CD8-positive, alpha-beta T cell (primary cell): ENCODE measurements at regions of chr18 and their contacts with region 1.

Region 1: GRCh38 chr18:35343936-35344735 is at the start of gene ZNF24:
- DNase-seq: peak; percentile 84 to 95 (median 92)
- ATAC-seq: peak; percentile 90
- H3K4me3 ChIP-seq: peak within 1 kb of the TSS; percentile 96 to 97
- H3K4me3 Mint-ChIP-seq: peak within 1 kb of the TSS; percentile 94
- H3K27ac ChIP-seq: peak within 1 kb of the TSS; percentile 98 to 99
- H3K27ac Mint-ChIP-seq: peak within 1 kb of the TSS; percentile 97
- H3K4me1 ChIP-seq: peaks cover 45% of the 10 kb centered on the region
- H3K4me1 Mint-ChIP-seq: peaks cover 48% of the 10 kb centered on the region
- H3K27me3 ChIP-seq: no peaks in the 10 kb centered on the region
- H3K27me3 Mint-ChIP-seq: no peaks in the 10 kb centered on the region
- CTCF ChIP-seq: no peak
- total RNA-seq, gene ZNF24: 55.3 to 57.0 TPM

Region 2: DNA sequence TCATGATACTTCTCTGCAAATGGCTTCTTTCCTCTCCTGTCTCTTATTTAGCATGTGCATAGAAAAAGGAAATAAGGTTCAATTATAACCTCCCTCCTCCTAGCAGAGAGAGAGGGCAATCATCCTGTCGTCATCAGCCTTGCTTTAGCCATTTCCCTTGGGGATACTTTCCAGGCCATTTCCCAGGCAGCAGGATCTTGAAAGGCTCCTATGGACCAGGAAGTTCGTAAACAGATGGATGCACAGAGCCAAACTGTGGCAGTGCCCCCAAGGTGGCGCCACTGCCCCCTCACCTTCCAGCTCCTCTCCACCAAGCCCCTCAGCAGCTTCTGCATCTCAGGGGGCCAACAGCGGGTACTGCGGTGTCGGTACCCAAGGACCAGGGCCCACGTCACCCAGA is 476.6 kb before region 1 on chr18:
- CTCF ChIA-PET with region 1: no interaction called
- POLR2A ChIA-PET with region 1: no interaction called
- intact Hi-C with region 1: loop called in 1 of 2 experiments (anchors 10 kb)
- DNase-seq: peak in 1 of 9 experiments; percentile 6
- ATAC-seq: no peak
- H3K4me3 ChIP-seq: no peak overlapping the region
- H3K4me3 Mint-ChIP-seq: no peak overlapping the region
- H3K27ac ChIP-seq: no peak overlapping the region
- H3K27ac Mint-ChIP-seq: no peak overlapping the region
- H3K4me1 ChIP-seq: peaks cover 3% of the 10 kb centered on the region
- H3K4me1 Mint-ChIP-seq: peaks cover 16% of the 10 kb centered on the region
- H3K27me3 ChIP-seq: no peaks in the 10 kb centered on the region
- H3K27me3 Mint-ChIP-seq: no peaks in the 10 kb centered on the region
- CTCF ChIP-seq: no peak

Region 3: DNA sequence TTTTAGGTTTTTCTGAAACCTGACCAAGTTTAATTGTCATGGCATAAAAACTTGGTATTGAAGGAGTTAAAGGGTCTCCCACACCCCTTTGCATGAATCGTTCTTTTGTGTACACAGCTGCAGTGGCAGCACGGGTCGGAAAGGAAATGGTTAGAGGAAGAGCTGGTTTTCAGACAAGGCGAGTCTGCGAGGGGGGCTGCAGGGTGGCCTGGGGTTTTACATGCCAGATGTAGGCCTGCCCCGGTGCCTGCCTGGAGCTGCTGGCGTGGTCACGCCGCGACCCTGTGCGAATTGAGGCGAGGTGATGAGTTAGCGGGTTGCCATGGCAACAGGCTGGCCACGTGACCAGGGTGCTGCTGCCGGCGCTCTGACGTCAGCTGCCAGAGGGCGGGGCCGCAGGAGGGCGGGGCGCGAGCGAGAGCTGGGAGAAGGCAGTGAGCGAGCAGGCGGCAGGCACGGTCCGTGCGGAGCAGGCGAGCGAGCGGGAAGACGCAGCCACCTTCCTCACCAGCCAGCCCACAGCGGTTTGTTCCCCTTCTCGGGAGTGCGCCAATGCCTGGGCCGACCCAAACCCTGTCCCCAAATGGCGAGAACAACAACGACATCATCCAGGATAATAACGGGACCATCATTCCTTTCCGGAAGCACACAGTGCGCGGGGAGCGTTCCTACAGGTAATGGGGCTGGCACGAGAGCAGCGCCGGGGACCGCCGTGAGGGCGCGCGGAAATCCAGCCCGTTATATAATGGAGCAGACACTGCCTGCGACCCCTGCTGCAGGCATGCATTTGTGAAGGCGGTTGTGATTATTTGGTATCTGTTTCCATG is 302.9 kb before region 1 on chr18 and contains the start of gene MAPRE2:
- CTCF ChIA-PET with region 1: no interaction called
- POLR2A ChIA-PET with region 1: interaction called, 7 read pairs
- intact Hi-C with region 1: loop called (anchors 2 to 5 kb)
- DNase-seq: peak; percentile 99 to 100 (median 100)
- ATAC-seq: peak; percentile 79
- H3K4me3 ChIP-seq: peak within 1 kb of the TSS; percentile 87 to 90
- H3K4me3 Mint-ChIP-seq: peak within 1 kb of the TSS; percentile 98
- H3K27ac ChIP-seq: peak within 1 kb of the TSS; percentile 93 to 96
- H3K27ac Mint-ChIP-seq: peak within 1 kb of the TSS; percentile 96
- H3K4me1 ChIP-seq: peaks cover 42% of the 10 kb centered on the region
- H3K4me1 Mint-ChIP-seq: peaks cover 44% of the 10 kb centered on the region
- H3K27me3 ChIP-seq: no peaks in the 10 kb centered on the region
- H3K27me3 Mint-ChIP-seq: no peaks in the 10 kb centered on the region
- CTCF ChIP-seq: no peak
- total RNA-seq, gene MAPRE2: 137 to 145 TPM

Region 4: DNA sequence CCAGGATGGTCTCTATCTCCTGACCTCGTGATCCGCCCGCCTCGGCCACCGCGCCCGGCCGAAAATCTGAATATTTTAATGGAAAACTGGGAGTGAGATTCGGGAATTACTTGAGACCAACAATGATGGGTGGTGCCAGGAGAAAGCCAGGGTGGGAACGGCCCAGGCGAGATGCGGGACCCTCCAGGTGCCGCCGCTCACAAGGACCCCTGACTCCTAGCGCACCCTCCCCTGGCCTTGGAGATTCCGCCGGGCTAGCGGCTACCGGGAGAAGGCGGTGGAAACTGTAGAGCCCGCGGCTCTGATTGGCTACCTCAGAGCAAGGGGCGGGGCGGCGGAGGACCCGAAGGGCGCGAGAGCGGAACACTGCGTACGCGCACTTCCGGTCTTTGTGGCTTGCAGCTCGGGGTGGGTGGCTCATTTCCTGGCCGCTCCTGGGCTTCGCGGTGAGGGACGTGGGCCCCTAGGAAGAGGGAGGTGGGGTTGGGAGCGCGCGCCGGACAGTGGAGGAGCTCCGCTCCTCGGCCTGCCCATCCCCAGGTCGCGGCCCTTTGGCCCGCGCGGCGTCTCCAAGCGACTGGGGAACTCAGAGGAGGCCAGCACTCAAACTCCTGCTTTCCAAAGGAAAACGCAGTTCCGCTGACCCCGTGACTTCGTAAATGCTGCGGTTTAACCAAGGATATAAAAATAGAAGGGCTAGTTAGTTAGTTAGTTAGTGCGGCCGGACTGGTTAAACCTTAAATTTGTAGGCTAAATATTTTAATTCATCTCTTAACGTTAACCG is 103.3 kb before region 1 on chr18 and contains the start of gene ZNF397:
- CTCF ChIA-PET with region 1: interaction called, 5 read pairs
- POLR2A ChIA-PET with region 1: interaction called, 5 read pairs
- intact Hi-C with region 1: loop called (anchors 1 kb)
- DNase-seq: peak; percentile 85 to 97 (median 96)
- ATAC-seq: peak; percentile 96
- H3K4me3 ChIP-seq: peak within 1 kb of the TSS; percentile 87 to 96
- H3K4me3 Mint-ChIP-seq: peak within 1 kb of the TSS; percentile 96
- H3K27ac ChIP-seq: peak within 1 kb of the TSS; percentile 94 to 98
- H3K27ac Mint-ChIP-seq: peak within 1 kb of the TSS; percentile 97
- H3K4me1 ChIP-seq: peaks cover 18% of the 10 kb centered on the region
- H3K4me1 Mint-ChIP-seq: peaks cover 39% of the 10 kb centered on the region
- H3K27me3 ChIP-seq: no peaks in the 10 kb centered on the region
- H3K27me3 Mint-ChIP-seq: no peaks in the 10 kb centered on the region
- CTCF ChIP-seq: no peak
- total RNA-seq, gene ZNF397: 6.7 to 6.8 TPM

Region 5: DNA sequence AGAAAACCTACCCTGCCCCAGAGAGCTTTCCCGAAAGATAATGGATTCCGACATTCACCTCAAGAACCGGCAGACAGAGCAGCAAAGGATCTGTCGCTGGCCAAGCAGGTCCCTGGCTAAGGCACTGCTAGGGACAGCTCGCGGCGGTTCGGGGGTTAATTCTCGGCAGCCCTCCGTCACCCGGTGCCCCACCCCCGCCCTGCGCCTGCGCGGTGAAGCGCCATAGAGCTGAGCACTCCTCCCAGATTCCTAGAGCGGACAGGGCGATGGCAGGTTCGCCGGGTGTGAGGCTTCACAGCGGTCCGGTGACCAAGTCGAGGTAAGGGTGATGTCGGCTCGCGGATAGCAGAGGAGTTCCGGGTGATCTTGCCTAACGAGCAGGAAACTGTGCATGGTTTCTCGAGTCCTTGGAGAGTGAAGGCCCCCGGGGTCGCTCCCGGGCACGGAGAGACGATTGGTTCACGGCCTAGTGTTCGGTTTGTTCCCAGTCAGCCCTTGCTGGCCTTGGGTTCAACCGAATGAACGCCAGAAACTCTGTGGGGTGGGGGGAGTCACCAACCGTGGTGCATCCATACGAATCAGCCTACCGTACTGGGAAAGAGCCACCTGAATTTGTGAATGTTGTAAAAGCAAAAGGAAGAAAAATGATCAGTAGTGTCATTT is 53.9 kb before region 1 on chr18 and contains the start of gene ZSCAN30:
- CTCF ChIA-PET with region 1: no interaction called
- POLR2A ChIA-PET with region 1: interaction called, 17 read pairs
- intact Hi-C with region 1: loop called (anchors 1 kb)
- DNase-seq: peak; percentile 92 to 98 (median 96)
- ATAC-seq: peak; percentile 94
- H3K4me3 ChIP-seq: peak within 1 kb of the TSS; percentile 78 to 82
- H3K4me3 Mint-ChIP-seq: peak within 1 kb of the TSS; percentile 99
- H3K27ac ChIP-seq: peak within 1 kb of the TSS; percentile 69 to 85
- H3K27ac Mint-ChIP-seq: peak within 1 kb of the TSS; percentile 99
- H3K4me1 ChIP-seq: peaks cover 17% of the 10 kb centered on the region
- H3K4me1 Mint-ChIP-seq: peaks cover 70% of the 10 kb centered on the region
- H3K27me3 ChIP-seq: no peaks in the 10 kb centered on the region
- H3K27me3 Mint-ChIP-seq: no peaks in the 10 kb centered on the region
- CTCF ChIP-seq: no peak
- total RNA-seq, gene ZSCAN30: 6.2 to 6.3 TPM

Region 6: DNA sequence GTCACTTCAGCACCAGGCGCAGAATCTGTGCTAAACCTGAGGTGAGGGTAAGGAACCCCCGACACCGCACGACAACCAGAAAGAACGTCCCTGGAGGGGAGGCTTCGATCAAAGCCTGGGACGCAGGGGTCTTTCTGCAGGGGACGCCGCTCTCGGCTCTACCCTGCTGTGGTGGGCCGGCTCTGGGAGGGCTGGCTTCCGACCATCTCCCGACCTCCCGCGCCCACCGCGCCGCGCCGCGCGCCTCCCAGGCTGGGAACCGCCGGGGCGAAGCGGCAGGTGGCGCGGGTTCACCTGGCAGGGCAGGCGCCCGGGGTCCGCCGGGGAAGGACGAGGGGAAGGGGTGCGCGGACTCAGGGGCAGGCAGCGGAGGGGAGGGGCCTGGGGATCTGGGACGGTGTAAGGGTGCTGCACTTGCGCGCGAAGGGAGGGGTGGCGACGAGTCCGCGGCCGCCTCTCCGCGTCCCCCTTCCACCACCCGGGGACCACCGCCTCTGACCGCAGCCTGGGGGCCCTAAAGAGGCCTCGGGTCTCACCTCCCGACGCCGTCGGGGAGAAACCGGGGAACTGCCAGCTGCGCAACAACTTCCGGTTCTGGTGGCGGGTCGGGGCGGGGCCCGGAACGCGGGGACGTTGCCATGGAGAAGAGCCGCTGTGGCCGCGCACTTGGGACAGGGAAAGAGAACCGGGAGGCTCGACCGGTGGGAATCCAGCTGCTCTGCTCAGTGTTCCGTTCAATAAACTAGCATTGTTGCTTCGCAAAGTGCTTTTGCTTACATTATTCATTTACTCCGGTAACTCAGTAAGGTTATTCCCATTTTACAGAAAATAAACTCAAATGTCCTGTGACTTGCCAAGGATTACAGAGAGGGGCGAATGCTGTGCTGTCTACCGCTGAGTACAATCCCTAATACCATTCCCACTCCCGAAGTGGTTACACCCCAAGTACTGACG is 32.9 kb after region 1 on chr18 and contains the start of gene ZNF396:
- CTCF ChIA-PET with region 1: no interaction called
- POLR2A ChIA-PET with region 1: interaction called, 3 read pairs
- intact Hi-C with region 1: loop called in 1 of 2 experiments (anchors 1 kb)
- DNase-seq: peak; percentile 31 to 84 (median 63)
- ATAC-seq: peak; percentile 74
- H3K4me3 ChIP-seq: peak within 1 kb of the TSS; percentile 74 to 75
- H3K4me3 Mint-ChIP-seq: peak within 1 kb of the TSS; percentile 83
- H3K27ac ChIP-seq: peak within 1 kb of the TSS; percentile 12 to 31
- H3K27ac Mint-ChIP-seq: peak within 1 kb of the TSS; percentile 11
- H3K4me1 ChIP-seq: peaks cover 4% of the 10 kb centered on the region
- H3K4me1 Mint-ChIP-seq: peaks cover 9% of the 10 kb centered on the region
- H3K27me3 ChIP-seq: no peaks in the 10 kb centered on the region
- H3K27me3 Mint-ChIP-seq: no peaks in the 10 kb centered on the region
- CTCF ChIP-seq: no peak
- total RNA-seq, gene ZNF396: not detected

Region 7: DNA sequence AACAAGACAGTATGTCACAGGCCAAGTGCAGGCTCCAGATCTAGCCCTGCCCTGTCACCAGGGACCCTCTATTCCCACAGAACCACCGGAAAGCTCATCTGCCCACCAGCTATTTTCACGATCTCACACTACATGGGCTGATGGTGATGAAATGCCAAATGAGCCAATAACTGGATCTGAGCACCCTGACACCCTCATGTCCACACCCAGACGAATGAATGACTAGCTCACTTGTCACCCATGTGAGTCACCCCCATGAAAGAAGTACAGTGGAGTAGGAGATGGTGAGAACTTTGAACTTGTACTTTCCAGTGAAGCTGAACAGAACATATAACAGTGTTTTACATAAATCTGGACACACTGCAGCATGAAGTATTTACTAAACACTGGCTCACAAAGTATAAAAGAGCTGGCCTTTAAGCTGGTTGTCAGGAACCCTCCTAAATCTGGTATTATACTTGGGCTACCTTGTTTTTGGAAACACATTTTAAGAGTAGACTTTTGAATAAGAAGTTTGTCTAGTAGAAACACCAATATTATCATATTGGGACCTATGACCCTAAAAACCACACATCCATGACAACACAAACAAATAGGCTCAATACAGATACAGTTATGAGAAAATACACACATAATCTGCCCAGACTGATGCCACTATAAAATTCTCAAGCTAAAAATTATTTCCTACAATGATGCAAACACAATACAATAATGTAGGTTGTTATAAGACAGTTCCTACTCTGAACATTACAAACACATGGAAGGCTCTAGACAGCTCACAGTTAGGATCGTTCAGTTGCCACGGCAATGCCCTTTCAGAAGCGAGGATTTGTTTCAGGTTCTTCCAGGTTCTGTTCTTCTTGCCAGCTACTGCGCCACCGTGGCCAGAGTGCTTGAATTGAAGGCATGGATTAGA is 134.6 kb after region 1 on chr18:
- CTCF ChIA-PET with region 1: no interaction called
- POLR2A ChIA-PET with region 1: no interaction called
- intact Hi-C with region 1: no loop called
- DNase-seq: peak in 2 of 9 experiments; percentile 21 to 43
- ATAC-seq: peak; percentile 31
- H3K4me3 ChIP-seq: no peak overlapping the region
- H3K4me3 Mint-ChIP-seq: no peak overlapping the region
- H3K27ac ChIP-seq: no peak overlapping the region
- H3K27ac Mint-ChIP-seq: no peak overlapping the region
- H3K4me1 ChIP-seq: no peaks in the 10 kb centered on the region
- H3K4me1 Mint-ChIP-seq: peaks cover 6% of the 10 kb centered on the region
- H3K27me3 ChIP-seq: no peaks in the 10 kb centered on the region
- H3K27me3 Mint-ChIP-seq: no peaks in the 10 kb centered on the region
- CTCF ChIP-seq: no peak

Region 8: DNA sequence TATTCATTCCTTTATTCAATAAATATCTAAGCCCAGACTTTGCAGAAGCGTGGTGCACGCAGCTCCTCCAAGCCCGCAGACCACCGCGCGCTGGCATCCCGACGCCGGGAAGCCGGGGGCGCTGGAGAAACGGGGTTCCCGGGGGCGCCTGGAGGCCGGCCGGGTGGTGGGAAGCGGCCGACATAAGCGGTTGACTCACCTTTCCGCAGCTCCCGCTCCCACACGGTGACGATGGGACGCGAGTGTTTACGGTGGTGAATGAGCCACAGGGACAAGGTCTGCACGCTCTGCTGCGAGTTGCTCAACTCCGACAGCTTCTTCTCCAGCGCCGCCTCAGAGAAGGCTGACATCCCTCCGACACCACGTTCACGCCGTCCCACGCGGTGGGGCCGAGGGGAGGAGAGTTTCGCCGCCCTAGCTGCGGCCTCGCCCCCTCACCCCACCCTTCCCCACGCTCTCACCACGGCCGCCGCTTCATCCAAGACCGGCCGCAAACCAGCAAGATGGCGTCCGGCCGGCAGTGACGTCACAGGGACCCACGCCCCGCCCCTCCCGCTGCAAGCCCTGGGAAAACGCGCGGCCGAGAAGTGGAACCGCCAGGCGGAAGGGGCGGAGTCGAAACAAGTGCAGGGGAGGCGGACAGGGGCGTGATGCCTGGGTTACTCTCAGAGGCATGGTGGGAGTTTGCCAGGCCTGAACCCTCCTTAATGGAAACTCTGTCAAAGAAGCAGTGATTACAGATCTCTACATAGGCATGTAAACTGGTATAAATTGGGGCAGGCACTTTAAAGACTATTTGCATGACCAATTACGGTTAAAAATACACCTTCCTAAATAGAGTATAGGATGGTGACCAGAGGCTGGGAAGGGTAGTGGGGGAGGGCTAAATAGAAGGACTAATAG is 723.2 kb after region 1 on chr18 and contains the start of gene RPRD1A:
- CTCF ChIA-PET with region 1: no interaction called
- POLR2A ChIA-PET with region 1: no interaction called
- intact Hi-C with region 1: loop called (anchors 1 to 5 kb)
- DNase-seq: peak; percentile 92 to 99 (median 97)
- ATAC-seq: peak; percentile 93
- H3K4me3 ChIP-seq: peak within 1 kb of the TSS; percentile 95 to 98
- H3K4me3 Mint-ChIP-seq: peak within 1 kb of the TSS; percentile 94
- H3K27ac ChIP-seq: peak within 1 kb of the TSS; percentile 88 to 89
- H3K27ac Mint-ChIP-seq: peak within 1 kb of the TSS; percentile 96
- H3K4me1 ChIP-seq: peaks cover 29% of the 10 kb centered on the region
- H3K4me1 Mint-ChIP-seq: peaks cover 46% of the 10 kb centered on the region
- H3K27me3 ChIP-seq: no peaks in the 10 kb centered on the region
- H3K27me3 Mint-ChIP-seq: peaks cover 3% of the 10 kb centered on the region
- CTCF ChIP-seq: no peak
- total RNA-seq, gene RPRD1A: 13.8 to 15.8 TPM